GM13976 (cell line): ENCODE measurements at regions of chr5 and their contacts with region 1.

Region 1: GRCh38 chr5:115098041-115098702 is 71.5 kb downstream of the TRIM36 start:
- DNase-seq: peak; percentile 49
- CTCF ChIP-seq: peak; percentile 64

Region 2: DNA sequence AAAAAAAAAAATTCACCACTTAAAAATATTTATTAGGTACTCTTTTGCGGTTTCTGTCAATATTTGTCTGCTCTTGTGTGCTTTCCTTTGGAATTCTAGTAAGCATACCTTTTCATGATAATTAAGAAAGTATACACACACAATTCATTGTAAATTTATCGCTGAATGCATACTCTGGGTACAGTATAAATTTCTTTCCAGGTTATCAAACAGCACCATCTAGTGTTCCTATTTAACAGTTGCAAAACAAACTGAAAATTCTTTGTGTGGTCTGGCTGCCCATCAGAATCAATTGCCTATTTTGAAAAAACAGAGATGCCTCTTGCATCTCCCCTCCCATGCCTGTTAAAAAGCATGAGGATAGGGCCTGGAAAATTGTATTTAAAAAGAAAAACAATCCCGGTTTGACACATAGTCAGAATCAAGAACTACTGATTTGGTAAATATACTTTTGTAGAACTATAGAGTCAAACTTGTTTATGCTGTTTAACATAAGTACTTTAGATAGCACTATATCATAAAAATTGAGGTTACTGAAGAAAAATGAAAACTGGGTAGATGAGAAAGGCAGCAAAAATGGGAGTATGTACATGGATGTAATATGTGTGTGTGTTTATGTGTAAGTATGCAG is 148.3 kb after region 1 on chr5:
- in situ Hi-C with region 1: loop called (anchors 10 kb)
- DNase-seq: peak; percentile 49
- CTCF ChIP-seq: peak; percentile 48

Region 3: GRCh38 chr5:115586601-115587048 is 488.5 kb after region 1 on chr5:
- in situ Hi-C with region 1: loop called (anchors 25 kb)
- DNase-seq: no peak
- CTCF ChIP-seq: peak; percentile 25